Astrocyte of the cerebellum (primary cell): ENCODE measurements at regions of chr1 and their contacts with region 1.

Region 1: DNA sequence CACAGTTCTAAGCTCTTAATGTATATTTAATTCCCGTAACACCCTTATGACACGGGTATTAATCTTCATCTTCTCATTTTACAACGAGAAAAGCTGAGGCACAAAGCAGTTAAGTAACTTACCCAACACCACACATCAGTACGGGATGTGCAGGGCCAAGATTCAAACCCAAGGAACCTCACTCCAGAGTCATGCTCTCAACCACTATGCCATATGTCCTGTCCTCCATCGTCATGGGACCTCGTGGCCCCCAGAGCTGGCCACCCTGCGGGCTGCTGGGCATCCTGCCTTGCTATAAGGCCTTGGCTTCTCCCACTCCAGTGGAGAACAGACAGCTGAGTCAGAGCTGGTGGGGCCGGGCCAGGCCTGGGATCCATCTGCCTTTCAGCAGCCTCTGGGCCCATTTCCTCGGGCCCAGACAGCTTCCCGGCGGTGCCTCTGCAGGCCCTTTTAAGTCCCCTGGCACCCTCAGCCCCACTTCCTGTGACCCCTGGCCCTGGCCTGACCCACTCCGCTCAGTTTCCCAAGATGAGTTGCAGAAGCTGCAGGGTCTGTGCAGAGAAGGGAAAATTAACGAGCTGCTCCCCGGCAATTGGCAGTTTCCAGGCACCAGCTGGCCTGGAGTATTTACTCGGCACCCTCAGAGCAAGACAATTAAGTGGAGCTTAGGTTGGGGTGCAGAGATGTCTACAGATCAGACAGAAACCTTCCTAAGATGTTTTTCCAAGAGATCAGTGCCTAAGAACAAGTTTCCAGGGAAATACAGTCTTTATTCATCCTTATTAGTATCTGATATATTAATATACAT is 98.2 kb downstream of the EPHB2 start:
- DNase-seq: peak; percentile 57
- H3K4me3 ChIP-seq: no peak overlapping the region
- CTCF ChIP-seq: no peak

Region 2: GRCh38 chr1:22739648-22740385 is 69.1 kb before region 1 on chr1:
- in situ Hi-C with region 1: no loop called
- DNase-seq: peak; percentile 87
- H3K4me3 ChIP-seq: no peak overlapping the region
- CTCF ChIP-seq: no peak

Region 3: DNA sequence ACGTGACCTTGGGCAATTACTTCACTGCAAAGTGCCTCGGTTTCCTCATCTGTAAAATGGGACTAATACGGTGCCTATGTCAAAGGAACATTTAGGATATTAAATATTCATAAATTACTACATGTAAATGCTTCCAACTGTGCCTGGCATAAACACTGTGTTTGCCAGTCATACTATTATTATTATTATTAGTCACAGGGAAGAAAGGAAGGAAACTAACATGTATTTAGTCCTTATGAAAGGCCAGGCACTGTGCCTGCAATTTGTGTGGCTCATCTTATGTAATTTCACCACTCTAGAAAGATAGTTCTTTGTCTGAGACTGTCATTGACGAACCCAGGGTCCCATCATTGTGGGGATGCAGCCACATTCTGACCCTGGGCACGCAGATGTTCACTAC is 53.2 kb before region 1 on chr1:
- in situ Hi-C with region 1: loop called (anchors 5 kb)
- DNase-seq: no peak
- H3K4me3 ChIP-seq: no peak overlapping the region
- CTCF ChIP-seq: no peak

Region 4: DNA sequence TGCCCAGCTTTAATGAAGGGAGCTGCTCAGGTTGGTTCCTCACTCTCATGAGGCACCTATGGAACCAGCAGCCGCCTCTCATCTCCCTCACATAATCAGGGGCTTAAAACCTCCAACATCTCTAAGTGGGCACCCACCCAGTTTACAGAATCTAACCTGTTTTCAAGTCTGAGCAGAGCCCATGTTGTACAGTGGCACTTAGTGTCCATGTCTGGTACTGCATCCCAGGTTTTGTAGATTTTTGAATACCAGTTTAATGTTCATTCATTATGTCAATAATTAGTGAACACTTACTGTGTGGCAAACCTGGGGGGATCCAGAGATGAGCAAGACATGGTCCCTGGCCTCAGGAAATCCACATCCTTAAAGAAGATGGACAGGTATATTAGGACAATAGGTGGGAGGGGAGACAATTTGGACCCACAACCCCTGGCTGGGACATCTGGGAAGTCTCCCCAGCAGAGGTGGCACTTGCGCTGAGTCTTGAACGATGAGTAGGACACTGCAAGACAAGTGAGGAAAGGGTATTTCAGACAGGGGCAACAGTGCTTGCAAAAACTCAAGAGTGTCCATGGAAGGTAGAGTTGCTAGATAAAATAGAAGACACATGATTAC is 80.4 kb after region 1 on chr1:
- in situ Hi-C with region 1: no loop called
- DNase-seq: peak; percentile 33
- H3K4me3 ChIP-seq: no peak overlapping the region
- CTCF ChIP-seq: peak; percentile 92

Region 5: GRCh38 chr1:23019094-23019862 is 210.4 kb after region 1 on chr1 and contains the start of gene KDM1A:
- in situ Hi-C with region 1: no loop called
- DNase-seq: peak; percentile 93
- H3K4me3 ChIP-seq: peak within 1 kb of the TSS; percentile 66
- CTCF ChIP-seq: peak; percentile 31